ENCODE measurements at regions of chrX and their contacts with region 1.

Region 1: GRCh38 chrX:40097497-40098263 is at the start of gene BCOR:
- DNase-seq: no peak
- H3K4me3 ChIP-seq: peak within 1 kb of the TSS; percentile 74 to 92
- H3K27ac ChIP-seq: peak within 1 kb of the TSS; percentile 87 to 92
- H3K4me1 ChIP-seq: peaks cover 0 to 11% of the 10 kb centered on the region in 2 donors
- H3K27me3 ChIP-seq: no peaks in the 10 kb centered on the region
- CTCF ChIP-seq: no peak
- total RNA-seq, gene BCOR: 26.7 TPM

Region 2: GRCh38 chrX:38803586-38804431 is 1293.9 kb before region 1 on chrX:
- intact Hi-C with region 1: loop called (anchors 10 kb)
- DNase-seq: peak; percentile 49 to 90
- H3K4me3 ChIP-seq: peak overlapping the region; percentile 66 to 78
- H3K27ac ChIP-seq: peak overlapping the region; percentile 80 to 91
- H3K4me1 ChIP-seq: peaks cover 0 to 5% of the 10 kb centered on the region in 2 donors
- H3K27me3 ChIP-seq: no peaks in the 10 kb centered on the region
- CTCF ChIP-seq: no peak

Region 3: GRCh38 chrX:39907964-39908616 is 189.6 kb before region 1 on chrX:
- intact Hi-C with region 1: loop called (anchors 5 kb)
- DNase-seq: peak; percentile 38 to 90
- H3K4me3 ChIP-seq: peak overlapping the region in 1 of 2 donors; percentile 47
- H3K27ac ChIP-seq: peak overlapping the region; percentile 48 to 72
- H3K4me1 ChIP-seq: peaks cover 4 to 15% of the 10 kb centered on the region in 2 donors
- H3K27me3 ChIP-seq: no peaks in the 10 kb centered on the region
- CTCF ChIP-seq: no peak

Region 4: GRCh38 chrX:40108959-40109287 is 11.2 kb after region 1 on chrX:
- intact Hi-C with region 1: loop called (anchors 1 kb)
- DNase-seq: peak in 1 of 2 donors; percentile 87
- H3K4me3 ChIP-seq: peak overlapping the region; percentile 68 to 71
- H3K27ac ChIP-seq: peak overlapping the region; percentile 83 to 96
- H3K4me1 ChIP-seq: peaks cover 5 to 17% of the 10 kb centered on the region in 2 donors
- H3K27me3 ChIP-seq: no peaks in the 10 kb centered on the region
- CTCF ChIP-seq: no peak

Region 5: DNA sequence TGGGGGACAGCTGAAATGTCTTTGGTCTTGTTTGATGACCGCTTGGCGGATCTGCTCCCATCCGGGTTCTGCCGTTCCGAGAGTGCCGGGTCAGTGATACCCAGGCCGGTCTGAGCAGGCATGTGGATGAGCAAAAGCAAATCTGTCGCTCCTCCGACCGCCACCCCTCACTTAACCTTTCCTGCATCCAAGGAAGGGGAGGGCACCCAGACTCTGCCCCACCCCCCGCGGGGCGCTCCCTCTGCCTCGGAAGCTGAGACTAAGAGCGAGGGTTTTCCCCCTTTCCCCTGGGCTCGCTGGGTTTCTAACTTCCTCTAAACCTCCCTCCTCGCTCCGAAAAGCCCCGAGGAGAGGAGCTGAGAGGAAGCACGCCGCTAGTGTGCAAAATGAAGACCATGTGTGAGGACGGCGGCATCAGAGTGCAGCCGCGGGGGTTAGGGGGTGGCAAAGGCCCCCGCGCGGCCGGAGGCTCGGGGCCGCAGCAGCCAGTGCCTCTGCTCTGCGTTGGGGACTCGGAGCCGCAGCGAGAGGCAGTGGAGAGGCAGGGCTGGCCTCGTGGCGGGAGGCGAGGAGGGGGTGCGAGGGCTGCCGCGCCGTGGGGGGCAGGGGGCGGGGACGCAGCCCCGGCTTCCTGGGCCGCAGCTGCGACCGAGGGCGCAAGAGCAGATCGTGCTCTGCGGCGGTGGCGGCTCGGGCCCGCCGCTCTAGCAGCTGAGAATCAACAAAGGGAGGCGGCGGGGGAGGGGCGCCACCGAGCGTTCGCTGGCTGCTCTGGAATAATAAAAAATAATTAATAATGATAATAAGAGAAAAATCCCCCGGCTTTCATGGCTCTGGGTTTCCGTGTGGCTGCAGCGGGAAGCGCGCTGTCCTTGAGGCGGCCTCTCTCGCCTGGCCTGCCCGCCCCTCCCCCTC is 55.9 kb after region 1 on chrX:
- intact Hi-C with region 1: loop called (anchors 2 kb)
- DNase-seq: no peak
- H3K4me3 ChIP-seq: peak overlapping the region; percentile 56 to 62
- H3K27ac ChIP-seq: peak overlapping the region; percentile 63 to 67
- H3K4me1 ChIP-seq: peaks cover 9 to 10% of the 10 kb centered on the region in 2 donors
- H3K27me3 ChIP-seq: peaks cover 8% of the 10 kb centered on the region
- CTCF ChIP-seq: no peak